Activated T-helper 2 cell treated with anti-CD3 and anti-CD28 coated beads, Interferon-gamma antibody, Interleukin-2, Interleukin-4, amounts not matched to agents 10 μg/mL and 5 μg/mL and 100 μg/mL, durations not matched to agents 14 hours and 24 hours and 36 hours (primary cell): ENCODE measurements at regions of chr6 and their contacts with region 1.

Region 1: DNA sequence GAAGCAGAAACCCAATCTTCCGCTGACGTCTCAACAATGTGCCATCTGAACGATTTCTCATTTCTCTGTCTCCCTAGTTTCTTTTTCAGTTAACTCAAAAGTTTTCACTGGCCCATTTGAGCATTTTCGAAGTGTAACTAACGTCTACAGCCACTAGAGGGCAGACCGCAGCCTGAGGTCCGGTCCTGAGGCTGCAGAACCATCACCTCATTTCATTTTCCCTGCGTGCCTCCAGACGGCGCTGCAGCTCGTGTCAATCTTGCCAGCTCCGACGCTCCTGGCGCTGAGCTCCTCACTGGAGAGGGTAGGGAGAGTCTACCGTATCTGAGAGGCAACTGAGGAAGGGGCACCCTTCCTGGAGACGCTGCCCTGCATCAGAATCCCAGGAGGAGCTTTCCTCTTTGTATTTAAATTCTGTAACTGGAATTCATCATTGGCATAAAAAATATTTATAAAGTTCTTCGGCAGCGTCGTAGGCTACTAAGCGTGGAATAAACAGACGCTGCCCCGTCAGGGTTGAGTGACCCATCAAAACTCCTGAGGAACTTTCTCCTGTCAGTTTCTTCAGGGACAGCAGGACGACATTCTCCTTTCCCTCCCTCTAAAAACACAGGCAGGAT is 28.5 kb upstream of the DTNBP1 start:
- DNase-seq: peak; percentile 78
- H3K4me3 Mint-ChIP-seq: peak overlapping the region; percentile 23
- H3K27ac Mint-ChIP-seq: peak overlapping the region; percentile 47
- H3K4me1 Mint-ChIP-seq: peaks cover 18% of the 10 kb centered on the region
- H3K27me3 Mint-ChIP-seq: no peaks in the 10 kb centered on the region

Region 2: GRCh38 chr6:15735567-15736265 is 44.4 kb after region 1 on chr6:
- intact Hi-C with region 1: loop called (anchors 2 kb)
- DNase-seq: no peak
- H3K4me3 Mint-ChIP-seq: peak overlapping the region; percentile 59
- H3K27ac Mint-ChIP-seq: peak overlapping the region; percentile 83
- H3K4me1 Mint-ChIP-seq: peaks cover 54% of the 10 kb centered on the region
- H3K27me3 Mint-ChIP-seq: no peaks in the 10 kb centered on the region

Region 3: DNA sequence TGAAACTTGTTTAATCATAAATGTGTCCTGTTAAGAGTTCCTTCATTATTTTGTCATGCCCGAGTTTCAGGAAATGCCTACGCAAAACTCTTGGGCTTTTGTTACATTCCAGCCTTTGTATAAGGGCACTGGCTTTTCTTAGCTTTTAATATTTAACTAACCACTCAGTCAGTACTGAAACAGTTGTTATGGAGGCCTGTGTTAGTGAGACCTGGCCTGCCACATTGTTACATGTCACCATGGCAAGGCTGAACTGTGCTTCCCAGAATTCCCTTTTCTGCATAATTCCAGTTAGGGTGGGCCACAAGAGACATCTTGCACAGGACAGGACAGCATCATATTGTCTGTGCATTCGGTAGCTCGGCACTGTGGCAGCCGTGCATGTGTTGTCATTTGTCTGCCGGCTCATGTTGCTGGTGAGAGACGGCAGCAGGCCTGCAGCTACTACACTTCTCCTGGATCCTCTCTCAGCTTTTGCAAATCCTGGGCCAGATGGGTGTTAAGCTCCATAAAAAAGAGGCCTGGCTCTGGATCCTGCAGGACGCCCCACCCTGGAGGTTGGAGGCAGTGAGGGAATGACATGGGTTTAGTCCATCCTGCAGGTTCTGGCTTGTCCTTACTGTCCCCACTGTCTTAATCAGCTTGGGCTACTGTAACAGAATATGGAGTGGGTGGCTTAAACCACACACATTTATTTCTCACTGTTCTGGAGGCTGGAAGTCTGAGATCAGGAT is 100.3 kb after region 1 on chr6:
- intact Hi-C with region 1: no loop called
- DNase-seq: no peak
- H3K4me3 Mint-ChIP-seq: no peak overlapping the region
- H3K27ac Mint-ChIP-seq: no peak overlapping the region
- H3K4me1 Mint-ChIP-seq: peaks cover 2% of the 10 kb centered on the region
- H3K27me3 Mint-ChIP-seq: no peaks in the 10 kb centered on the region

Region 4: DNA sequence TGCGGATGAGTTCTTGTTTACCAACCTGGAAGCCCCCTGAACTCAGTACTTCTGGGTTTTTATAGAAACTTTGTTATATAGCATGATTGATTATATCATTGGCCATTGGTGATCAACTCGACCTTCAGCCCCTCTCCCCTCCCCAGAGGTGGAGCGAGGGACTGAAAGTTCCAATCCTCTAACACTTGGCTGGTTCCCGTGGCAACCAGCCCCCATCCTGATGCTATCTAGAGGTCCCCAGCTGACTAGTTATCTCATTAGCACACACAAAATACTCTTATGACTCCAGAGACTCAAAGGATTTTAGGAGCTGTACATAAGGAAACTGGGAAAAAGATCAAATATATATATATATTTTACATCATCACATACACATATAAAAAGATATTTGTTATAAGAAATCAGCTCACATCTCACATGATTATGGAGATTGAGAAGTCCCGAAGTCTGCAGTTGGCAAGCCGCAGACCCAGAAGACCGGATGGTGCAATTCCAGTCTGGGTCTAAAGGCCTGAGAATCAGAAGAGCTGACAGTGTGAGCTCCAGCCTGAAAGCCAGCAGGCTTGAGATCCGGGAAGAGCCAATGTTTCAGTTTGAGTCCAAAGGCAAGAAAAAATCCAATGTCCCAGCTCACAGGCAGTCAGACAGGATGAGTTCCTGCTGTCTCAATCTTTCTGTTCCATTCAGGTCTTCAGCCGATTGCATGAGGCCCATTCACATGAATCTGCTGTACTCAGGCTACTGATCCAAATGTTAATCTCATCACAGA is 150.8 kb after region 1 on chr6:
- intact Hi-C with region 1: loop called (anchors 5 kb)
- DNase-seq: no peak
- H3K4me3 Mint-ChIP-seq: no peak overlapping the region
- H3K27ac Mint-ChIP-seq: peak overlapping the region; percentile 63
- H3K4me1 Mint-ChIP-seq: peaks cover 39% of the 10 kb centered on the region
- H3K27me3 Mint-ChIP-seq: no peaks in the 10 kb centered on the region

Region 5: GRCh38 chr6:15901141-15902115 is 210.1 kb after region 1 on chr6:
- intact Hi-C with region 1: loop called (anchors 1 kb)
- DNase-seq: peak; percentile 64
- H3K4me3 Mint-ChIP-seq: peak overlapping the region; percentile 24
- H3K27ac Mint-ChIP-seq: peak overlapping the region; percentile 99
- H3K4me1 Mint-ChIP-seq: peaks cover 69% of the 10 kb centered on the region
- H3K27me3 Mint-ChIP-seq: no peaks in the 10 kb centered on the region

Region 6: DNA sequence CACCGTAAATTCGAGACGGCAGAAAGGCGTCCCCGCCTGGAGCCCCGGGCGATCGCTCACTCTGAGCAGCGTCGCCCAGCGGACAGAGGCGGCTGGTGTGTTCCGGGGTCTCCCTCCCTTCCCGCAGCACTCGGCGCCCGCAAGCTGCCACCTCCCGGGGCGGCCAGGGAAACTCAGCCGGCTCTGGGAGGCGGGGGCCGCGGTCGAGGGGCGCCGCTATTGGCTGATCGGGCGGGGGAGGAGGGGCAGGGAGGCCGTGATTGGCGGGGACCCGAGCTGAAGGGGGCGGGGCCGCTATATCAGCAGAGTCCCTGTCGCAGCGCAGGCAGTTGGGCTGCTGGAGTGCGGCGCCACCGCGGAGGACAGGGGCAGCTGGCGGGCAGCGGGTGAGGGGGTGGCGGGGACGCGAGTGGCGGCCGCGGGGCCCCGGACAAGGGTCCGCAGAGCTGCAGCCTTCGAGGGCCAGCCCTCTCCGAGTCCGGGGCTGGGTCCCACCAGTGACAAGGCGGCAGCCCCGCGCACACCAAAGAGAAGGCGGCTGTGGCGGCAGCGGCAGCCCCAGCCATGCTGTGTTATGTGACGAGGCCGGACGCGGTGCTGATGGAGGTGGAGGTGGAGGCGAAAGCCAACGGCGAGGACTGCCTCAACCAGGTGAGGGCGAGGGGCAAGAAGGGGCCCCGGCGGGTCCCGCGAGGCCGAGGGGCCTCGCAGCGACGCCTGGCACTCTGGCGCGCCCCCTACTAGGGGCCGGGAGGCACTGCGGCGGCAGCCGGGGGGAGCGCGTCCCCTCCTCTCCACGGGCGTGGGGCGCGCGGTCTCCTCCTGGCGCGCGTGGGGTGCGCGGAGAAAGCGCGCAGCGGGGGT is 437.6 kb after region 1 on chr6 and contains the start of gene MYLIP:
- intact Hi-C with region 1: loop called (anchors 1 kb)
- DNase-seq: peak; percentile 94
- H3K4me3 Mint-ChIP-seq: peak within 1 kb of the TSS; percentile 90
- H3K27ac Mint-ChIP-seq: peak within 1 kb of the TSS; percentile 86
- H3K4me1 Mint-ChIP-seq: peaks cover 25% of the 10 kb centered on the region
- H3K27me3 Mint-ChIP-seq: peaks cover 16% of the 10 kb centered on the region
- total RNA-seq, gene MYLIP: 81.2 and 83.1 TPM in 2 replicates

Region 7: GRCh38 chr6:16183187-16183664 is 491.9 kb after region 1 on chr6:
- intact Hi-C with region 1: loop called (anchors 1 kb)
- DNase-seq: no peak
- H3K4me3 Mint-ChIP-seq: no peak overlapping the region
- H3K27ac Mint-ChIP-seq: peak overlapping the region; percentile 37
- H3K4me1 Mint-ChIP-seq: peaks cover 28% of the 10 kb centered on the region
- H3K27me3 Mint-ChIP-seq: peaks cover 11% of the 10 kb centered on the region